Activated CD4-positive, alpha-beta T cell treated with anti-CD3 and anti-CD28 coated beads for 36 hours (primary cell): ENCODE measurements at regions of chr12 and their contacts with region 1.

Region 1: DNA sequence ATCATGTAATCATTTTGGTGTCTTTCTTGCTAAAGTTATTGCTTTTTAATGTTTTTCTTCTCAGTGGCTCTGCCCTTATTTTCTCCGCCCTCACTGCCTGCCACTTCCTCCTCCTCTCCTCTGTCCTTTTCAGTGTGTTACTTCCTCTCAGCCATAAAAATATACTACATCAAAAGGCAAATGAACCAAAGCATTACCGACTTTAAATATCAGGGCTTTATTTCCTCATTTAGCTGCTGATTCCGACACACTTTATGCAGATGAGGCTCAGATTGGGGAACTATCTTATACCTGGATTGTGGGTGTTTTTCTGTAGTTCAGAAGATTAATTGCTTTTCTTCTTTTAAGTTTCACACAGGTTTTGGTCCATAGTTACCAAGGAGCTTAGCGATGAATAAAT is 118.1 kb downstream of the CMAS start:
- DNase-seq: no peak
- ATAC-seq: peak; percentile 44
- H3K4me3 Mint-ChIP-seq: peak overlapping the region; percentile 24
- H3K27ac Mint-ChIP-seq: peak overlapping the region; percentile 69
- H3K4me1 Mint-ChIP-seq: peaks cover 39% of the 10 kb centered on the region
- H3K27me3 Mint-ChIP-seq: no peaks in the 10 kb centered on the region

Region 2: DNA sequence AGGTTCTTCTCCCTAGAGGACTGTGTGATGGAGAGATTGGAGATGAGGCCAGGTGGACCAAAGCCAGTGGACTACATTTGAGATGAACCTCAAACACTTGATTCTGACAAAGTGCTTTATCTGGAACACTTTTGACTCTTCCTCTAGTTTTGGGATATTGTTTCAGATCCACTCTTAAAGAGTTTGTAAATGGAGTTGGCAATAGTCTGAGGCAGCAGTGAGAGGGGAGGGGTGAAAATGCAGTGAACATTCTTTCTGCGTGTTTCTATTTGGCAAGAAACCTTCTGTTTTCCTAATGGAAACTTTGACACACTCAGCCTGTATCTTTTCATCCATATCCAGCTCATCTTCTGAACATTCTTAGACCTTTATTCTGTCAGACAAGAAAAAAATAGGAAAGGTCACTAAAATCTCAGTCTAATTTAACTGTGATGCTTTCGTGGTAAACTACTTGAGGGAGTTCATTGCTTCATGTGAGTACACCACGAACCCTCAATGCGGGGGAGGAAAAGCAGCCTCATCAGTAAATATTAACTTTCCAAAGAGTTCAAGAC is 332.3 kb before region 1 on chr12:
- CTCF ChIA-PET with region 1: no interaction called
- POLR2A ChIA-PET with region 1: no interaction called
- intact Hi-C with region 1: no loop called
- DNase-seq: no peak
- ATAC-seq: no peak
- H3K4me3 Mint-ChIP-seq: no peak overlapping the region
- H3K27ac Mint-ChIP-seq: no peak overlapping the region
- H3K4me1 Mint-ChIP-seq: no peaks in the 10 kb centered on the region
- H3K27me3 Mint-ChIP-seq: peaks cover 19% of the 10 kb centered on the region

Region 3: GRCh38 chr12:22100958-22101748 is 63.0 kb before region 1 on chr12:
- CTCF ChIA-PET with region 1: interaction called, 3 read pairs
- POLR2A ChIA-PET with region 1: no interaction called
- intact Hi-C with region 1: loop called in 1 of 2 experiments (anchors 10 kb)
- DNase-seq: peak; percentile 62
- ATAC-seq: peak; percentile 65
- H3K4me3 Mint-ChIP-seq: no peak overlapping the region
- H3K27ac Mint-ChIP-seq: no peak overlapping the region
- H3K4me1 Mint-ChIP-seq: peaks cover 14% of the 10 kb centered on the region
- H3K27me3 Mint-ChIP-seq: no peaks in the 10 kb centered on the region

Region 4: GRCh38 chr12:22211128-22211527 is 47.0 kb after region 1 on chr12:
- CTCF ChIA-PET with region 1: no interaction called
- POLR2A ChIA-PET with region 1: no interaction called
- intact Hi-C with region 1: loop called in 1 of 2 experiments (anchors 5 kb)
- DNase-seq: no peak
- ATAC-seq: no peak
- H3K4me3 Mint-ChIP-seq: no peak overlapping the region
- H3K27ac Mint-ChIP-seq: no peak overlapping the region
- H3K4me1 Mint-ChIP-seq: no peaks in the 10 kb centered on the region
- H3K27me3 Mint-ChIP-seq: no peaks in the 10 kb centered on the region